Activated CD4-positive, alpha-beta memory T cell treated with anti-CD3 and anti-CD28 coated beads for 36 hours (primary cell): ENCODE measurements at regions of chr6 and their contacts with region 1.

Region 1: GRCh38 chr6:43013843-43014433 is at the starts of genes KLHDC3 and MEA1:
- DNase-seq: peak; percentile 100
- H3K4me3 Mint-ChIP-seq: peak within 1 kb of the TSS; percentile 94
- H3K27ac Mint-ChIP-seq: peak within 1 kb of the TSS; percentile 87
- H3K4me1 Mint-ChIP-seq: peaks cover 55% of the 10 kb centered on the region
- H3K27me3 Mint-ChIP-seq: no peaks in the 10 kb centered on the region
- total RNA-seq, gene KLHDC3: 48.1 to 52.3 TPM
- total RNA-seq, gene MEA1: 90.2 to 94.4 TPM

Region 2: GRCh38 chr6:42901536-42901957 is 112.4 kb before region 1 on chr6:
- CTCF ChIA-PET with region 1: interaction called, 4 read pairs
- POLR2A ChIA-PET with region 1: no interaction called
- intact Hi-C with region 1: loop called (anchors 5 kb)
- DNase-seq: peak; percentile 78
- H3K4me3 Mint-ChIP-seq: no peak overlapping the region
- H3K27ac Mint-ChIP-seq: no peak overlapping the region
- H3K4me1 Mint-ChIP-seq: peaks cover 8% of the 10 kb centered on the region
- H3K27me3 Mint-ChIP-seq: no peaks in the 10 kb centered on the region

Region 3: GRCh38 chr6:42978839-42979522 is 35.0 kb before region 1 on chr6 and contains the start of gene PEX6:
- CTCF ChIA-PET with region 1: interaction called, 5 read pairs
- POLR2A ChIA-PET with region 1: interaction called, 15 read pairs
- intact Hi-C with region 1: loop called (anchors 1 kb)
- DNase-seq: peak; percentile 97
- H3K4me3 Mint-ChIP-seq: peak within 1 kb of the TSS; percentile 94
- H3K27ac Mint-ChIP-seq: peak within 1 kb of the TSS; percentile 98
- H3K4me1 Mint-ChIP-seq: peaks cover 56% of the 10 kb centered on the region
- H3K27me3 Mint-ChIP-seq: no peaks in the 10 kb centered on the region
- total RNA-seq, gene PEX6: 25.6 to 26.4 TPM

Region 4: GRCh38 chr6:42984001-42984923 is 29.7 kb before region 1 on chr6 and contains the start of gene PPP2R5D:
- CTCF ChIA-PET with region 1: interaction called, 5 read pairs
- POLR2A ChIA-PET with region 1: interaction called, 15 read pairs
- intact Hi-C with region 1: loop called (anchors 1 kb)
- DNase-seq: peak; percentile 99
- H3K4me3 Mint-ChIP-seq: peak within 1 kb of the TSS; percentile 85
- H3K27ac Mint-ChIP-seq: peak within 1 kb of the TSS; percentile 85
- H3K4me1 Mint-ChIP-seq: peaks cover 56% of the 10 kb centered on the region
- H3K27me3 Mint-ChIP-seq: no peaks in the 10 kb centered on the region
- total RNA-seq, gene PPP2R5D: 59.1 to 60.2 TPM

Region 5: DNA sequence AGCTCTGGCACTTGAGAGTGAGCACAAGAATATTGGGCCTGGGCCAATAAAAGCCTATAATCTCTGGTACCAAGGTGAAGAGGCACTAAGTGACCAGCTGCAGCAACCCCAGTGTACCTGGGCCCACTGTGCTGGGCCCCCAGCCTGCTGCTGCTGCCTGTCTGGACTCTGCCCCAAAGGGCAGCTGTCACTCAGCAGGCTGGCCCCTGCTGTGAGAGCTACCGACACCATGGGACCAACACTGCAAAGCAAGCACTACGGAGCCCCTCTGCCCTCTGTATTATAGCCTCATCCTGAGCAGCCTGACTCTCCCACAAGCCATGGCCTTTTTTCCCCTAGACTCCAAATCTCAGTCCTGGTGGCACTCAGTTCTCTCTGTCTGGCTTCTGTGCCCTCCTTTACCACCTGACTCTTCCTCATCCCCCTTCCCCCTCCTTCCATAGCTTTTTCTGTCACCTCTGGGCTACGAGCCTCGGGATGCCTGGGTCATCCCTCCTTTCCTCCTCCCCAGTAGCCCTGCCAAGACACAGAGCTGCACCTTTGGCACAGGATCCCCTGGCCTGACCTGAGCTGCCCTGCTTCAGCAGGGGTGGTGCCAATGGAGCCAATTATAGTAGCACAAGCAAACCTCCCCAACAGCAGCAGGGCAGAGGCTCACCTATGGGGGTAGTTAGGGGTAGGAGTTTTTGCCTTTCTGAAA is 21.7 kb after region 1 on chr6:
- CTCF ChIA-PET with region 1: no interaction called
- POLR2A ChIA-PET with region 1: no interaction called
- intact Hi-C with region 1: no loop called
- DNase-seq: no peak
- H3K4me3 Mint-ChIP-seq: no peak overlapping the region
- H3K27ac Mint-ChIP-seq: no peak overlapping the region
- H3K4me1 Mint-ChIP-seq: no peaks in the 10 kb centered on the region
- H3K27me3 Mint-ChIP-seq: no peaks in the 10 kb centered on the region

Region 6: DNA sequence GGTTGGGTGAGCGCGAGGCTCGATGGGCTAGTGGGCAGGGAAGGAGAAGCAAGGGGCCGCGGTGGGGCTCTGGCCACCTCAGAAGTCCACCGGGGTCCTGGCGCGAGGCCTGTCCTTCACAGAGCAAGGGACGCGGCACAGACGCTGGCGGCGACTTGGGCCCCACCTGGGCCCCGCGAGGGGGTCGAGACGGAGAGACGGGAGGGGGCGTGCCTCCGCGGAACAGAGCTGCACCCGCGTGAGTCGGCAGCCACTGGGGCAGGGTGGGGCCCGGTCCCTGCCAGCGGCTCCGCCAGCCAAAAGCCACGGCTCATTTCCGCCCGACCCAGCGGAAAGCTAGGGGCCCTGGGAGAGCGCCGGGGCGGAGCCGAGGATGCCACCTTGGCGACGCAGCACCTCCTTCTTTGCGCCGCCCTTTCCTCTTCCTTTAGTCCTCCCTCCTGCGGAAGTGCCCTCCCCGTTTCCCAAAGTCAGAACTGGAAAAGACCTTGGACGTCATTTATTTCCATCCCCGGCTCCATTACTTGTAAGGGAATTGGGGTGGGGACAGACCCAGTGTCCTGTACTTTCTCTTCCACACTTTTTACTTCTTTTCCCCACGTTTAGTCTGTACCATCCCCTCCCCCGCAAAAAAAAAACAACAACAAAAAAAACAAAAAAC is 39.7 kb after region 1 on chr6 and contains the start of gene CUL7:
- CTCF ChIA-PET with region 1: interaction called, 5 read pairs
- POLR2A ChIA-PET with region 1: interaction called, 11 read pairs
- intact Hi-C with region 1: loop called (anchors 1 kb)
- DNase-seq: peak; percentile 96
- H3K4me3 Mint-ChIP-seq: peak within 1 kb of the TSS; percentile 98
- H3K27ac Mint-ChIP-seq: peak within 1 kb of the TSS; percentile 95
- H3K4me1 Mint-ChIP-seq: peaks cover 44% of the 10 kb centered on the region
- H3K27me3 Mint-ChIP-seq: no peaks in the 10 kb centered on the region
- total RNA-seq, gene CUL7: 23.2 to 23.8 TPM

Region 7: DNA sequence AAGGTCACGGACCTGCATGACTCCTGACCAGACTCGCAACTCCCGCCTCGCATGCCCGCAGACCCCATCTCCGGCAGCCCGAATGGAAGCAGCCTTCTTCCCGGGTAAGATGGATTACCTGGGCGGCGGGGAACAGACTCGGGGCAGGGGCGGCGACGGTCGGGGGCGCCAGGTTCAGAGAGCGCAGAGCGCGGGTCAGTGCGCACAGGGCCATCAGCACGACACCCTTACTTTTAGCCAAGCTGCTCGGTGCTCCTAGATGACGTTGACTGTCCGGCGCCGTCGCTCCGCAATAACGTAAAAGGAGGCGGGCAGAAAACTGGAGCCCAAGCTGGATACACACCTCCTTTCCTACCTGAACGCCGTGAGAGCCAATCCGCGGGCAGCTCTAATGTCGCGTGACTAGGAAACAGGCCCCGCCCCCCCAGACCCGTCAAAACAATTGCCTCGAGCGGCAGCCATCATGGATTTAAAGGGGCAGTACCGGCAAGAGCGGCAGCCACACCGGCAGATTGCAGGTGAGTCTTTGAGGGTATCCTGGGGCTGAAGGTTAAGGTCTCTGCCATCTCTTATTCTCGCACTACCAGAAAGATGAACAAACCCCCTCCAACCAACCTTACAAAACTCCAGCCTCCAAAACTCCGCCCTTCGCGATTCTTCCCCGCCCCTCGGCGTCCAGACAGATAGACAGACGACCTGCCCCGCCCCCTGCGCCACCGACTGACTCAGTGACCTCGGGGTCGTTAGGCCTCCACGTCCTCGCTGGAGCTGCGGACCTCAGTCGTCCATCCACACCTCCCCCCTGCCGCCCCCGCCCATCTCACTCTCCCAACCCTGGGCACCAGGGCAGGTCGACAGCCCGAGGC is 45.5 kb after region 1 on chr6 and contains the starts of genes KLC4 and MRPL2:
- CTCF ChIA-PET with region 1: interaction called, 5 read pairs
- POLR2A ChIA-PET with region 1: interaction called, 10 read pairs
- intact Hi-C with region 1: loop called (anchors 1 kb)
- DNase-seq: peak; percentile 100
- H3K4me3 Mint-ChIP-seq: peak within 1 kb of the TSS; percentile 89
- H3K27ac Mint-ChIP-seq: peak within 1 kb of the TSS; percentile 95
- H3K4me1 Mint-ChIP-seq: peaks cover 30% of the 10 kb centered on the region
- H3K27me3 Mint-ChIP-seq: no peaks in the 10 kb centered on the region
- total RNA-seq, gene KLC4: 11.0 to 11.9 TPM
- total RNA-seq, gene MRPL2: 91.0 to 95.4 TPM

Region 8: GRCh38 chr6:43193939-43194338 is 180.0 kb after region 1 on chr6:
- CTCF ChIA-PET with region 1: no interaction called
- POLR2A ChIA-PET with region 1: no interaction called
- intact Hi-C with region 1: no loop called
- DNase-seq: no peak
- H3K4me3 Mint-ChIP-seq: no peak overlapping the region
- H3K27ac Mint-ChIP-seq: no peak overlapping the region
- H3K4me1 Mint-ChIP-seq: peaks cover 9% of the 10 kb centered on the region
- H3K27me3 Mint-ChIP-seq: no peaks in the 10 kb centered on the region

Region 9: GRCh38 chr6:43269273-43270007 is 255.5 kb after region 1 on chr6:
- CTCF ChIA-PET with region 1: no interaction called
- POLR2A ChIA-PET with region 1: no interaction called
- intact Hi-C with region 1: no loop called
- DNase-seq: peak; percentile 57
- H3K4me3 Mint-ChIP-seq: peak overlapping the region; percentile 28
- H3K27ac Mint-ChIP-seq: no peak overlapping the region
- H3K4me1 Mint-ChIP-seq: peaks cover 5% of the 10 kb centered on the region
- H3K27me3 Mint-ChIP-seq: no peaks in the 10 kb centered on the region

Region 10: DNA sequence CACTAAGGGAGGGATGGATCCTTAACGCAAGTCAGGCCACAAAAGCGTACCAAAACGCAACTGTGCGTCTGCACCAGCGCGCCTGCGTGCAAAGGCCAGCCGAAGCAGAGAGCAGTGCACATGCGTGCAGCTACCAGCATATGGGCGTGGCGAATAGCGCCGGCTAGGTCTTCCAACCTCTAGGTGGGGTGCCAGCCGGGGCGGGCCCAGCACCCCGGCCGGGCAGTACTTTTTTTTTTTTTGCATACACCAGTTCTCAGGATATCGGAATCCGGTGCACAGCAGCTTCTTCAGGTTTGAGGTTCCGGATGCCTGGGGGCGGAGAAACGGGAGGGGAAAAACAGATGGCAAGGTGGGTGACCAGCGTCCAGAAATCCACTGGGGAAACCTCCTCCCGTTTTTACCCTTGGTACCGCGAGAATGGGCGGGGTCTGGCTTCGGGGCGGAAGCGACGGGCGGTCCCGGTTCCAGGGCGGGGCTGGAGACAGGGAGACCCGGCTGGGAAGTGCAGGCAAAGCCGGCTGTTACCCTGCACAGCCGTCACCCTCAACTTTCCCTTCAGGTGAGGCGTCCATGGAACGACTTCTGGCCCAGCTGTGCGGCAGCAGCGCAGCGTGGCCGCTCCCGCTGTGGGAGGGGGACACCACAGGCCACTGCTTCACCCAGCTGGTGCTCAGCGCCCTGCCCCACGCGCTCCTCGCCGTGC is 413.6 kb after region 1 on chr6 and contains the start of gene ABCC10:
- CTCF ChIA-PET with region 1: no interaction called
- POLR2A ChIA-PET with region 1: no interaction called
- intact Hi-C with region 1: loop called (anchors 5 kb)
- DNase-seq: peak; percentile 97
- H3K4me3 Mint-ChIP-seq: peak within 1 kb of the TSS; percentile 95
- H3K27ac Mint-ChIP-seq: peak within 1 kb of the TSS; percentile 96
- H3K4me1 Mint-ChIP-seq: peaks cover 17% of the 10 kb centered on the region
- H3K27me3 Mint-ChIP-seq: no peaks in the 10 kb centered on the region
- total RNA-seq, gene ABCC10: 27.2 to 31.9 TPM